ENCODE measurements at regions of chr6 and their contacts with region 1.

Region 1: GRCh38 chr6:157764178-157765033 is 58.6 kb upstream of the SNX9 start:
- DNase-seq: peak; percentile 73
- ATAC-seq: peak; percentile 43
- H3K4me3 Mint-ChIP-seq: peak overlapping the region; percentile 81
- H3K27ac Mint-ChIP-seq: peak overlapping the region; percentile 99
- H3K4me1 Mint-ChIP-seq: peaks cover 95% of the 10 kb centered on the region
- H3K27me3 Mint-ChIP-seq: no peaks in the 10 kb centered on the region
- CTCF ChIP-seq: no peak

Region 2: DNA sequence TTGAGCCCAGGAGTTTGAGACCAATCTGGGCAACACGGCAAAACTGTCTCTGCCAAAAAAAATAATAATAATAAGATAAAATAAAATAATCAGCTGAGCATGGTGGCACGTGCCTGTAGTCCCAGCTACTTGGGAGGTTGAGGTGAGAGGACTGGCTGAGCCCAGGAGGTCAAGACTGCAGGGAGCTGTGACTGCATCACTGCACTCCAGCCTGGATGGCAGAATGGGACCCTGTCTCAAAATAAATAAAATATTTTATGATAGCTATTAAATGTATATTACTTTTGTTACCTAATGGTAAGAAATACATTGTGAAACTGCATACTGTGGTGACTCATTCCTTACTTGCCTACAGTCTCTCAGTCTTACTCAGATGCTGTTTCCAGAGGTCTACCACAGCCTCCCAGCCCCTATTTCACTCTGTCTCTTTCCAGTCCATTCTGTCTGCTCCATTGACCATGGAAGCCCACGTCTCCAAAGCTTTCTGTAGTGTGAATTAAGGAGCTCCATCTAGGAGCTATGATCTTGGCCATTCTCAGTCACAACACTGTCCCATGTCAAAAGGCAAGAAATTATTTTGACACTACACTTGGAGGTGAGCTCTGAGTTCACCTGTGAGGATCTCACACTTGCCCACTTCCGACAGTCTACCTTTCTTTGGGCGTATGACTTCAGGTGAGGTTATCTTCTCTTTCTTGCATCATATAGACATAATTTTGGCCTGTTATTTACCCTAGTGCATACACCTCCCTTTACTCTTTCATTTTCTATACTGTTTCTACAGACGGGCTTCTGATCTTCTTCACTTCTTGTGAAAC is 36.2 kb after region 1 on chr6:
- CTCF ChIA-PET with region 1: interaction called, 4 read pairs
- POLR2A ChIA-PET with region 1: interaction called, 17 read pairs
- intact Hi-C with region 1: loop called (anchors 1 kb)
- DNase-seq: no peak
- ATAC-seq: peak; percentile 90
- H3K4me3 Mint-ChIP-seq: peak overlapping the region; percentile 66
- H3K27ac Mint-ChIP-seq: peak overlapping the region; percentile 70
- H3K4me1 Mint-ChIP-seq: peaks cover 37% of the 10 kb centered on the region
- H3K27me3 Mint-ChIP-seq: no peaks in the 10 kb centered on the region
- CTCF ChIP-seq: no peak

Region 3: GRCh38 chr6:157841211-157841840 is 76.9 kb after region 1 on chr6:
- CTCF ChIA-PET with region 1: no interaction called
- POLR2A ChIA-PET with region 1: interaction called, 9 read pairs
- intact Hi-C with region 1: loop called (anchors 1 kb)
- DNase-seq: peak; percentile 47
- ATAC-seq: peak; percentile 96
- H3K4me3 Mint-ChIP-seq: peak overlapping the region; percentile 58
- H3K27ac Mint-ChIP-seq: peak overlapping the region; percentile 57
- H3K4me1 Mint-ChIP-seq: peaks cover 89% of the 10 kb centered on the region
- H3K27me3 Mint-ChIP-seq: no peaks in the 10 kb centered on the region
- CTCF ChIP-seq: no peak

Region 4: GRCh38 chr6:157885211-157885788 is 120.9 kb after region 1 on chr6:
- CTCF ChIA-PET with region 1: interaction called, 250 read pairs
- POLR2A ChIA-PET with region 1: interaction called, 10 read pairs
- intact Hi-C with region 1: no loop called
- DNase-seq: no peak
- ATAC-seq: peak; percentile 86
- H3K4me3 Mint-ChIP-seq: peak overlapping the region; percentile 24
- H3K27ac Mint-ChIP-seq: peak overlapping the region; percentile 76
- H3K4me1 Mint-ChIP-seq: peaks cover 37% of the 10 kb centered on the region
- H3K27me3 Mint-ChIP-seq: no peaks in the 10 kb centered on the region
- CTCF ChIP-seq: no peak

Region 5: DNA sequence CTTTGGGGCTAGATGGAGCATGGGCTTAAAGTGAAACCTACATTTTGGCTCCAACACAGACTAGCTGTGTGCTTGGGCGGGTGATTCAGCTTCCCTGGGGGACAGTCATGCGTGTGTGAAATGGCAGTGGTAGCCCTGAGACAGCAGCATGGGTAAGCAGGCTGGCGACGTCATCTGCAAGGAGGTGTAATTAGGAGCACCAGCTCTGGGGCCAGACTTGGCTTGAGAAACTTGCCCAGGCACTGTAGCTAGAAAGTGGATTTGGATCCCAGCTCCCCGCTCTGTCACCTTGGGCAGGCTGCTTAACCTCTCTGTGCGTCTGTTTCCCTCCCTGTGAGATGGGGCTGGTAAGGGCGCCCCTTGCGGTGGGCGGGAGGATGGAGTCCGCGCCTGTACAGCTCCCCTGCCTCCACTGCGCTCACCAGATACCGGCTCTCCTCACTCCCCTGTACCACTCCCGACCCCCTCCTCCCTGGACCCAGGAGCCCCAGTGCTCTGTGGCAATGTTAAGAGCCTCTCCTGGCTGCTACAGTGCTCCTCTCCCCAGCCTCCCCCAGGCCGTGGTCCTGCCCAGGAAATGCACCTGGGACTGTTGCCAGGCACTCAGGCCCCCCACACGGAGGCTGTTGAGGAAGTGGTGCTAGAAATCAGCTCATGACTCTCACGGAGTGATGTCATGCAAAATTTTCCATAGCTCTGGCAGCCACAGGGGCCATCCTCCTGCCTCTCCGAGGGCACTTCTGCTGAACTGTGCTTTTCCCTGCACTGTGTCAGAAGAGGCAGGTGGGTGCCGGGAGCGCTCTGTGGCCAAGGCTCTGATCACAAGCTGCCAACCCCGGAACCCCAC is 261.9 kb after region 1 on chr6:
- CTCF ChIA-PET with region 1: interaction called, 4 read pairs
- POLR2A ChIA-PET with region 1: interaction called, 6 read pairs
- intact Hi-C with region 1: loop called (anchors 1 kb)
- DNase-seq: peak; percentile 77
- ATAC-seq: peak; percentile 71
- H3K4me3 Mint-ChIP-seq: peak overlapping the region; percentile 85
- H3K27ac Mint-ChIP-seq: peak overlapping the region; percentile 98
- H3K4me1 Mint-ChIP-seq: peaks cover 39% of the 10 kb centered on the region
- H3K27me3 Mint-ChIP-seq: no peaks in the 10 kb centered on the region
- CTCF ChIP-seq: peak; percentile 63

Region 6: GRCh38 chr6:159098636-159099106 is 1334.3 kb after region 1 on chr6:
- CTCF ChIA-PET with region 1: no interaction called
- POLR2A ChIA-PET with region 1: no interaction called
- intact Hi-C with region 1: loop called (anchors 10 kb)
- DNase-seq: peak; percentile 56
- ATAC-seq: peak; percentile 51
- H3K4me3 Mint-ChIP-seq: peak overlapping the region; percentile 81
- H3K27ac Mint-ChIP-seq: peak overlapping the region; percentile 99
- H3K4me1 Mint-ChIP-seq: peaks cover 93% of the 10 kb centered on the region
- H3K27me3 Mint-ChIP-seq: no peaks in the 10 kb centered on the region
- CTCF ChIP-seq: no peak

Measured in activated B cell treated with CpG ODN at 0.5 μM for 24 hours (primary cell).